ENCODE measurements at regions of chr1 and their contacts with region 1.

Region 1: GRCh38 chr1:205515781-205516253 is 11.3 kb downstream of the CDK18 start:
- DNase-seq: no peak

Region 2: GRCh38 chr1:205500240-205501233 is 15.3 kb before region 1 on chr1:
- intact Hi-C with region 1: loop called (anchors 2 kb)
- DNase-seq: no peak